Activated CD4-positive, alpha-beta T cell treated with anti-CD3 and anti-CD28 coated beads, Interleukin-2, amount 10 ng/mL, durations not matched to agents 7 days and 5 days (primary cell): ENCODE measurements at regions of chr1 and their contacts with region 1.

Region 1: DNA sequence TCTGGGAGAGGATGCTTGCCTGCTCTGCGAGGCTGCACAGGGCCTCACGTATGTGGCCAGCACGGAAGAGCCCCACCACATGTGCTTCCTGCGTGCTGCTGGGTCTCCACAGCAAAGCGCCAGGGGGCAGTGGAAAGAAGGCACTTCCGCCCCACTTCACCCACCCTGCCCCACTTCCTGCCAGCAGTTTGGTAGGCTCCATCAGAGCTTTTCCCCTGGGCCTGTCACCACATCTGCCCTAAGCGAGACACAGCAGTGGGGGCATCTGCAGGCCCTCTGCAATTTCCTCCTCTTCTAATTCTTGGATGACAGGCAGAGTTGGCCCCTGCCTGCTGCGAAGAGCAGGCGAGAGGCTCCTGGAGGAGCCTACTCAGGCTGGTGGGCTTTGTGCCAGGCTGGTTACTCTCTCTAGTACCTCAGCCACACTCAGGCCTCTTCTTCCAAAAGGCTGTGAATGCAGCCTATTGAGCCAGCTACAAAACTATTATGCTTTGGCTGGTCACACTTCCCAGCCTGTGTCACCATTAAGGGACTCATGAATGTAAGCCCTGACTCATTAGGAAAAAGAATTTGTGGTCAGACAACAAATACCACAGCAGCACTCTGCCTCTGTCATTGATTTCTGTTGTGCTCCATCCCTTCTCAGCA is 25.0 kb downstream of the CD244 start:
- DNase-seq: peak; percentile 92
- H3K4me3 Mint-ChIP-seq: peak overlapping the region; percentile 56
- H3K27ac Mint-ChIP-seq: peak overlapping the region; percentile 93
- H3K4me1 Mint-ChIP-seq: peaks cover 63% of the 10 kb centered on the region
- H3K27me3 Mint-ChIP-seq: no peaks in the 10 kb centered on the region

Region 2: GRCh38 chr1:160726498-160727315 is 111.0 kb before region 1 on chr1:
- CTCF ChIA-PET with region 1: interaction called, 11 read pairs
- POLR2A ChIA-PET with region 1: no interaction called
- DNase-seq: peak; percentile 79
- H3K4me3 Mint-ChIP-seq: no peak overlapping the region
- H3K27ac Mint-ChIP-seq: no peak overlapping the region
- H3K4me1 Mint-ChIP-seq: peaks cover 24% of the 10 kb centered on the region
- H3K27me3 Mint-ChIP-seq: no peaks in the 10 kb centered on the region

Region 3: GRCh38 chr1:160777486-160778089 is 60.1 kb before region 1 on chr1:
- CTCF ChIA-PET with region 1: interaction called, 23 read pairs
- POLR2A ChIA-PET with region 1: interaction called, 3 read pairs
- DNase-seq: peak; percentile 62
- H3K4me3 Mint-ChIP-seq: no peak overlapping the region
- H3K27ac Mint-ChIP-seq: no peak overlapping the region
- H3K4me1 Mint-ChIP-seq: peaks cover 46% of the 10 kb centered on the region
- H3K27me3 Mint-ChIP-seq: no peaks in the 10 kb centered on the region

Region 4: DNA sequence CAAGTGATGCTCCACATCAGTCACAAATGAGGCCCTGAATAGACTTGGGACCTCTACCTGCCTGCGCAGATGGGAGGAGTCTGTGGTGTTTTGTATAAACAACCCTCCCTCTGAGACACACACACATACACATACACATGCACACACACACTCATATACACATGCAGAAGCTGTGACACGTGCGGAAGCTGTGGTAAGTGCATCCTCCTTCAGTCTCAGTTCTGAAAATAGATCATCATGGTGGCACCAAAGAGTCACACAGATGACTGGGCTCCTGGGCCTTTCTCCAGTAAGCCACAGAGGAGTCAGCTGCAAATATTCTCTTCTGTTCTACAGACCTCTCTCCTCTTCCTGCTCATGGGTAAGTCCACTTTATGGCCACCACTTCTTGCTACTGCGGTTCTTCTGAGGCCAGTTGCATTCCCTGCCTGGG is 41.7 kb before region 1 on chr1 and contains the start of gene LY9:
- CTCF ChIA-PET with region 1: interaction called, 14 read pairs
- POLR2A ChIA-PET with region 1: no interaction called
- DNase-seq: peak; percentile 91
- H3K4me3 Mint-ChIP-seq: peak within 1 kb of the TSS; percentile 86
- H3K27ac Mint-ChIP-seq: peak within 1 kb of the TSS; percentile 92
- H3K4me1 Mint-ChIP-seq: peaks cover 61% of the 10 kb centered on the region
- H3K27me3 Mint-ChIP-seq: no peaks in the 10 kb centered on the region
- total RNA-seq, gene LY9: 45.9 to 49.0 TPM